ENCODE measurements at regions of chr5 and their contacts with region 1.

Region 1: GRCh38 chr5:139315056-139315615 is 21.6 kb downstream of the MATR3 start:
- DNase-seq: no peak

Region 2: GRCh38 chr5:138386290-138386689 is 928.8 kb before region 1 on chr5:
- intact Hi-C with region 1: loop called in 1 of 2 experiments (anchors 10 kb)
- DNase-seq: no peak